MCF 10A (cell line): ENCODE measurements at regions of chr19 and their contacts with region 1.

Region 1: GRCh38 chr19:1168877-1169791 is 4.9 kb downstream of the SBNO2 start:
- DNase-seq: peak; percentile 97
- H3K4me3 Mint-ChIP-seq: peak overlapping the region; percentile 75
- H3K27ac Mint-ChIP-seq: peak overlapping the region; percentile 88
- H3K4me1 Mint-ChIP-seq: peaks cover 22% of the 10 kb centered on the region
- H3K27me3 Mint-ChIP-seq: no peaks in the 10 kb centered on the region
- CTCF ChIP-seq: no peak

Region 2: GRCh38 chr19:1085676-1086442 is 83.3 kb before region 1 on chr19:
- CTCF ChIA-PET with region 1: no interaction called
- POLR2A ChIA-PET with region 1: no interaction called
- intact Hi-C with region 1: no loop called
- DNase-seq: no peak
- H3K4me3 Mint-ChIP-seq: no peak overlapping the region
- H3K27ac Mint-ChIP-seq: no peak overlapping the region
- H3K4me1 Mint-ChIP-seq: peaks cover 6% of the 10 kb centered on the region
- H3K27me3 Mint-ChIP-seq: no peaks in the 10 kb centered on the region
- CTCF ChIP-seq: no peak

Region 3: DNA sequence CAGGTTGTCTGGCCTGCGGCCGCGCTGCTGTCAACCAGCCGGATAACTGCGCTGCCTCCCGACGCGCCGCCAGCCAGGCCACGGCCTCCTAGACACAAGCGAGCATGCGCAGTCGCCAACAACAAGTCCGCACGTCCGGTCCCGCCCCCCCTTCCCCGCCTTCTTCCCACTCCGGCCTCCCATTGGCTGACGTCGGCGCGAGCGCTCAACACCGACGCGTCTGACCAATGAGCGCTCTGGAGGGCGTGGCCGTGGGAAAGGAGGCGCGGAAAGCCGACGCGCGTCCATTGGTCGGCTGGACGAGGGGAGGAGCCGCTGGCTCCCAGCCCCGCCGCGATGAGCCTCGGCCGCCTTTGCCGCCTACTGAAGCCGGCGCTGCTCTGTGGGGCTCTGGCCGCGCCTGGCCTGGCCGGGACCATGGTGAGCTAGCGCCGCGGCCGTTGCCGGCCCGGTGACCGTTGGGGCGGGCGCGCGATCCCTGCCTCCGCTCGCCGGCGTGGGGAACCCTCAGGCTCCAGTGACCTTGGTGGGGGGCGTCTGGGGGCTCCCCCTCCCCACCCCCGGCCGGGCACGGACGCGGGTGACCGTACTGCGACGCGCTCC is 65.3 kb before region 1 on chr19 and contains the start of gene GPX4:
- CTCF ChIA-PET with region 1: interaction called, 4 read pairs
- POLR2A ChIA-PET with region 1: interaction called, 73 read pairs
- intact Hi-C with region 1: no loop called
- DNase-seq: peak; percentile 100
- H3K4me3 Mint-ChIP-seq: peak within 1 kb of the TSS; percentile 71
- H3K27ac Mint-ChIP-seq: peak within 1 kb of the TSS; percentile 78
- H3K4me1 Mint-ChIP-seq: peaks cover 10% of the 10 kb centered on the region
- H3K27me3 Mint-ChIP-seq: no peaks in the 10 kb centered on the region
- CTCF ChIP-seq: no peak
- total RNA-seq, gene GPX4: 179 and 191 TPM in 2 replicates

Region 4: GRCh38 chr19:1154731-1155351 is 14.3 kb before region 1 on chr19:
- CTCF ChIA-PET with region 1: interaction called, 4 read pairs
- POLR2A ChIA-PET with region 1: interaction called, 45 read pairs
- intact Hi-C with region 1: no loop called
- DNase-seq: peak; percentile 97
- H3K4me3 Mint-ChIP-seq: peak overlapping the region; percentile 62
- H3K27ac Mint-ChIP-seq: peak overlapping the region; percentile 83
- H3K4me1 Mint-ChIP-seq: peaks cover 5% of the 10 kb centered on the region
- H3K27me3 Mint-ChIP-seq: no peaks in the 10 kb centered on the region
- CTCF ChIP-seq: no peak

Region 5: DNA sequence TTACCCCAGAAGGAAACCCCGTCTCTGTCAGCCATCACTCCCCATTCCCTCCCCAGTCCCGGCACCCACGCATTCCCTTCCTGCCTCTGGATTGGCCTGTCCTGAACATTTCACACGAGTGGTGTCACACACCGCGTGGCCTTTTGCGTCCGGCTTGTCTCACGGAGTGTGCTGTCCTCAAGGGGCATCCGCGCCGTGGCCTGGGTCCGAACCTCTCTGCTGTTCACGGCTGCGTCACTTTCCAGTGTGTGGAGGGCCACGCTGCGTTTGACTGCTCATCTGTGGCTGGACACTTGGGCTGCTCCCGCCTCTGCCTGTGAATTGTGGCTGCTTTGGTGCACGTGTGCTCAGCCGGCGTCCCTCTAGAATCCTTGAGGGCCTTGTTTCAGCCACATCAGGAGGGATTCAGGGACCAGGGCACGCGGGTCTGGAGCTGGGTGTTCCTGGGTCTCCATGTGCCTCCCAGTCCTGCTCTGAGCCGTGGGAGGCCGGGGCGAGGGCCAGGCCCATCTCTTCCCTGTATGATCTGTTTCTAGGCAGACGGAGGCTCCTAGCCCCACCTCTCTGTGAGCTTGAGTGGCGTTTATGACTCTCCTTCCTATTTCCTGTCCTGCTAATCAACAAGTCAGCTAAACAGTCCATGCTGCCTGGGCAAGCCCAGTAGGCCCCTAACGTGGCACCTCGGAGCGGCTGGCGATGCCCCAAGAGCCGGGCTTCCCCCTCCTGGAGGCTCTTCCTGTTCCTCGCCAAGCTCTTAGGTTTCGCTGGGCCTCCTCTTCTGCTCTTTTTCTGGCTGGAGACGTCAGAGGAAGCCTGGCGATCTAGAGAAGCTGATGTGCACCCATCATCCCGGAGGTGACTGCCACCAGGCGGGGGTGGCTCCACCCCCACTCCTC is 44.5 kb after region 1 on chr19:
- CTCF ChIA-PET with region 1: no interaction called
- POLR2A ChIA-PET with region 1: interaction called, 13 read pairs
- intact Hi-C with region 1: no loop called
- DNase-seq: peak; percentile 91
- H3K4me3 Mint-ChIP-seq: peak overlapping the region; percentile 63
- H3K27ac Mint-ChIP-seq: peak overlapping the region; percentile 89
- H3K4me1 Mint-ChIP-seq: peaks cover 46% of the 10 kb centered on the region
- H3K27me3 Mint-ChIP-seq: no peaks in the 10 kb centered on the region
- CTCF ChIP-seq: no peak

Region 6: DNA sequence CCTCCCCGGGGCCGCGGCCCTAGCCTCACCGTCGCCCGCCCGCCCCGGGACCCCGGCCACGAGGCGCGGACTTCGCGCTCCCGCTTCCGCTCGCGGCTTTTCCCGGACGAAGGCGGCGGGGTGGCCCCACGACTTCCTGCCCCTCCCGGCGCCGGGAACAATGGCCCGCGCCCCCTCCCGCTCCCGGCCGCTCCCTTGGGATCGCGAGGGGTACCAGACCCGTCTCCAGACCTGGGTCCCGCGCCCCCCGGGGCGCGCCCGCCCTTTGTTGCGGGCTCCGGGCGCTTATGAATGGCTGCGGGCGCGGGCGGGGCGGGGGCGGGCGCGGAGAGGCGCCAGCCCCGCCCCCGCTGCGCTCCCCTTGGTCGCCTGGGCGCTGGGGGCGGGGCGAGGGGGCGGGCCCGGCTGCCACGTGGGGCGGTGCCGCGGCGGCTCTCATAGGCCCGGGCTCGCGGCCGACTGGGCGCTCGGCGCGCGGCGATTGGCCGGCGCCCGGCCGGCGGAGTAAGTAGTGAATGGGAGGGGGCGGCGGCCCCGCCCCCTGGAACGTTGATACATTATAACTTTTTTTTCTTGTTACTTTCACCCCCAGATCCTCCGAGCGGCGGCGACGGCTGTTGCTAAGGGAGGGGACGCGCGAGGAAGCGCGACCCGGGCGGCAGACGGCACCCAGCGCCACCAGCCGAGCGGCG is 80.3 kb after region 1 on chr19:
- CTCF ChIA-PET with region 1: no interaction called
- POLR2A ChIA-PET with region 1: interaction called, 14 read pairs
- intact Hi-C with region 1: no loop called
- DNase-seq: peak; percentile 97
- H3K4me3 Mint-ChIP-seq: peak overlapping the region; percentile 86
- H3K27ac Mint-ChIP-seq: no peak overlapping the region
- H3K4me1 Mint-ChIP-seq: peaks cover 9% of the 10 kb centered on the region
- H3K27me3 Mint-ChIP-seq: no peaks in the 10 kb centered on the region
- CTCF ChIP-seq: no peak